ENCODE measurements at regions of chr1 and their contacts with region 1.

Region 1: GRCh38 chr1:24081190-24081589 is 30.7 kb downstream of the MYOM3 start:
- DNase-seq: no peak
- H3K4me3 ChIP-seq: no peak overlapping the region
- H3K4me3 Mint-ChIP-seq: no peak overlapping the region
- H3K27ac ChIP-seq: no peak overlapping the region
- H3K27ac Mint-ChIP-seq: no peak overlapping the region
- H3K4me1 ChIP-seq: no peaks in the 10 kb centered on the region
- H3K4me1 Mint-ChIP-seq: no peaks in the 10 kb centered on the region
- H3K27me3 ChIP-seq: no peaks in the 10 kb centered on the region
- H3K27me3 Mint-ChIP-seq: peaks cover 0 to 7% of the 10 kb centered on the region in 2 donors

Region 2: DNA sequence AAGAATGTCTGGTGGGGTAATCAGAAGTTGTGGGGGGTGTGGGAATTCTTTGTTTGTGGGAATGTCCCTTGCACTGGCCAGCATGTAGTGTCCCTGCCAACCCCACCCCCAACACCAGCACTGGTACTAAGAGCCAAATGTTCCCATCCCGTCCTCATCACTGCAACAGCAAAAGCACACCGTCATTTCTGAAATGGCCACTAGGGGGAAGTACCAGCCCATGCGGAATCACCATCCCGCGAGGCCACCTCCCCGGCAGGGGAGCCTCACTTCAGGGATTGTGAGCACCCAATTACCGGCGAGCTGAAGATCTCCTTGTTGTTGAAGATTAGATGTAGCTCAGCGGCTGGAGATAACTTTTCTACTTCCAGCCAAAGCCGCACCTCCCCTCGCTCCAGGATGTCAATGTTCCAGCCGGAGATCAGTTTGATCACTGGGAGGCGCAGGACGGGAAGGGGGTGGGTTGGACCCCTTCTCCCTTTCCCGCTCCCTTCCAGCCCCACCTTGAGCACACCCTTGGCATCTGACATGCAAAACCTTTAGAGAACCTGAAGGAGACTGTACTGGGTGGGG is 10.3 kb before region 1 on chr1:
- CTCF ChIA-PET with region 1: interaction called, 10 read pairs
- POLR2A ChIA-PET with region 1: no interaction called
- intact Hi-C with region 1: no loop called
- DNase-seq: peak; percentile 56 to 72 (median 63)
- H3K4me3 ChIP-seq: no peak overlapping the region
- H3K4me3 Mint-ChIP-seq: no peak overlapping the region
- H3K27ac ChIP-seq: no peak overlapping the region
- H3K27ac Mint-ChIP-seq: no peak overlapping the region
- H3K4me1 ChIP-seq: no peaks in the 10 kb centered on the region
- H3K4me1 Mint-ChIP-seq: peaks cover 0 to 5% (median 4%) of the 10 kb centered on the region in 4 donors
- H3K27me3 ChIP-seq: no peaks in the 10 kb centered on the region
- H3K27me3 Mint-ChIP-seq: peaks cover 1 to 5% of the 10 kb centered on the region in 2 donors